ENCODE measurements at regions of chr6 and their contacts with region 1.

Region 1: GRCh38 chr6:112029045-112029822 is 24.7 kb upstream of the CCN6 start:
- DNase-seq: peak; percentile 90
- ATAC-seq: peak; percentile 20
- H3K4me3 Mint-ChIP-seq: no peak overlapping the region
- H3K27ac Mint-ChIP-seq: peak overlapping the region; percentile 87
- H3K4me1 Mint-ChIP-seq: peaks cover 76% of the 10 kb centered on the region
- H3K27me3 Mint-ChIP-seq: no peaks in the 10 kb centered on the region

Region 2: GRCh38 chr6:112018619-112019416 is 10.4 kb before region 1 on chr6:
- CTCF ChIA-PET with region 1: interaction called, 65 read pairs
- POLR2A ChIA-PET with region 1: interaction called, 4 read pairs
- intact Hi-C with region 1: no loop called
- DNase-seq: no peak
- ATAC-seq: no peak
- H3K4me3 Mint-ChIP-seq: no peak overlapping the region
- H3K27ac Mint-ChIP-seq: peak overlapping the region; percentile 43
- H3K4me1 Mint-ChIP-seq: peaks cover 78% of the 10 kb centered on the region
- H3K27me3 Mint-ChIP-seq: no peaks in the 10 kb centered on the region

Region 3: GRCh38 chr6:112725541-112726085 is 696.4 kb after region 1 on chr6:
- CTCF ChIA-PET with region 1: no interaction called
- POLR2A ChIA-PET with region 1: no interaction called
- intact Hi-C with region 1: no loop called
- DNase-seq: no peak
- ATAC-seq: no peak
- H3K4me3 Mint-ChIP-seq: no peak overlapping the region
- H3K27ac Mint-ChIP-seq: no peak overlapping the region
- H3K4me1 Mint-ChIP-seq: no peaks in the 10 kb centered on the region
- H3K27me3 Mint-ChIP-seq: no peaks in the 10 kb centered on the region

Measured in activated CD4-positive, alpha-beta T cell treated with anti-CD3 and anti-CD28 coated beads for 36 hours (primary cell).